HEK293 (cell line): ENCODE measurements at regions of chr9 and their contacts with region 1.

Region 1: DNA sequence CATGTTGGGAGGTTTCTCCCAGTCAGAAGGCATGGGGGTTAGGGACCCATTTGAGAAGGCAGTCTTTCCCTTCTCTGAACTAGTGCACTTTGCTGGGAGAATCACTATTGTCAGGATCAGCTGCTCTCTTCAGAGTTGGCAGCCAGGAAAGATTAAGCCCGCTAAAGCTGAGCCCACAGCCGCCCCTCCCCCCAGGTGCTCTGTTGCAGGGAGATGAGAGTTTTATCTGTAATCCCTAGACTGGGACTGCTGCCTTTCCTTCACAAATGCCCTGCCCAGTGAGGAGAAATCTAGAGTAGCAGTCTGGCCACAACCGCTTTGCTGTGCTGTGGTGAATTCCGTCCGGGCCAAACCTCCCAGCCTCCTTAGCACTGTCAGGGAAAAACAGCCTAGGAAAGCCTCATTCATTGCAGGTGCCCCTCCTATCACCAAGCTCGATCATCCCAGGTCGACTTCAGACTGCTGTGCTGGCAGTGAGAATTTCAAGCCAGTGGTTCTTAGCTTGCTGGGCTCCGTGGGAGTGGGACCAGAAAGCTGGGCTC is 69.8 kb downstream of the CNTLN start:
- H3K4me3 ChIP-seq: no peak overlapping the region
- H3K27ac ChIP-seq: no peak overlapping the region
- H3K4me1 ChIP-seq: no peaks in the 10 kb centered on the region
- CTCF ChIP-seq: no peak

Region 2: DNA sequence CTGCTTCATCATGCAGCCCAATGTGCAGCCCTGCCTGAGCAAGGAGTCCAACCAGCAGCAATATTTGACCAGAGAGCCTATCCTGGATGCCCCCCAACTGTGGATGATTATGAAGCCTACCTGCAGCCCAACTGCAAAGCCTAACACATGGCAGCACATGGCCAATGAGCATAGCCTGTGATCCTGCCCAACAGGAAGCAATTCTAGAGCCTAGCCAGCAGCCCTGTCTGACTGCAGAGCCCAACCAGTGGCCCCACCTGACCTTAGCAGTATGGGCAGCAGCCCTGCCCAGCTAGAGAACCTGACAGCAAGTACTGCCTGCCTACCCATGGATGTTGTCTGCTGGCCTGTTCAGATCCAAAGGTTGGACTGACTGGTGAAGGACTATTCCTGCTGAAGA is 276.9 kb after region 1 on chr9:
- CTCF ChIA-PET with region 1: no interaction called
- POLR2A ChIA-PET with region 1: interaction called, 10 read pairs
- H3K4me3 ChIP-seq: no peak overlapping the region
- H3K27ac ChIP-seq: no peak overlapping the region
- H3K4me1 ChIP-seq: no peaks in the 10 kb centered on the region
- CTCF ChIP-seq: no peak